PC-9 (cell line): ENCODE measurements at regions of chr16 and their contacts with region 1.

Region 1: DNA sequence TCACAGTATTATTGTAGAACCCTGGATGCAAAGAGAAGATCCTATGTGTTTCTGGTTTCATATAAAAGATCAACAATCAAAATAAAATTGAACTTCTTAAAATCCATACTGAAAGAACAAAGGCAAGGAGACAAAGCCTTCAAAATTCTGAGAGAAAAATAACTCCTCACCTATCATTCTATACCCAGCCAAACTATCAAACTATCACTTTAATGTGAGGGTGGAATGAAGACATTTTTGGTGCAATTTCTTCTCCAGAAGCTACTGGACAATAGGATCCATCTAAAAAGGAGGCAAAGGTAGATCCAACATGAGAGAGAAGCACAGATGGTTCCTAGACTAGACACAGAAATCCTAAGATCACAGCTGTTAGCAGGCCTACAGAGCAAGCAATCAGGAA is 71.1 kb downstream of the CPPED1 start:
- DNase-seq: no peak
- H3K4me3 ChIP-seq: no peak overlapping the region
- H3K27ac ChIP-seq: no peak overlapping the region
- H3K4me1 ChIP-seq: no peaks in the 10 kb centered on the region
- H3K27me3 ChIP-seq: no peaks in the 10 kb centered on the region
- CTCF ChIP-seq: no peak

Region 2: DNA sequence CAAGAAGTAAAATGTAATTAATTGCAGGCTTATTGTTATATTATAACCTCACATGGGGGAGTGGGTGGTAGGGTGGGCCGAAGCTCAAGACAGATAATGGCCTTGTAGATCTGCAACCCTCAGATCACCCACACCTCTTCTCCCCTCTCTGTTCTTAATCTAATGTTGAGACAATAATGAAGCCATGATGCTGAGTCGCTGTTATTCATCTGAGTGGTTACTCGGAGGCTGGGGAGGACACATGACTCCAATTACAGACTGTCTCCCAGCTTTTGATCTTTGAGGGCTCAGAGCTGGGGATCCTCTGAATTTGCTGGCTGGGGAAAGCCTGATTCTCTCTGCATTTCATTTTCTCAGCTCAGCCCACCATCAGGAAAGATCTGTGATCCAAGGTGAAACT is 444.1 kb after region 1 on chr16:
- CTCF ChIA-PET with region 1: interaction called, 12 read pairs
- POLR2A ChIA-PET with region 1: no interaction called
- intact Hi-C with region 1: no loop called
- DNase-seq: peak in 1 of 2 experiments; percentile 10
- H3K4me3 ChIP-seq: no peak overlapping the region
- H3K27ac ChIP-seq: peak overlapping the region; percentile 72
- H3K4me1 ChIP-seq: peaks cover 27% of the 10 kb centered on the region
- H3K27me3 ChIP-seq: no peaks in the 10 kb centered on the region
- CTCF ChIP-seq: no peak